Transverse colon (tissue), 4 donors: ENCODE measurements at regions of chr15 and their contacts with region 1.

Region 1: GRCh38 chr15:43081283-43081682 is 24.6 kb downstream of the UBR1 start:
- DNase-seq: no peak
- H3K4me3 ChIP-seq: no peak overlapping the region
- H3K27ac ChIP-seq: no peak overlapping the region
- H3K4me1 ChIP-seq: peaks cover 0 to 18% (median 3%) of the 10 kb centered on the region in 4 donors
- H3K27me3 ChIP-seq: no peaks in the 10 kb centered on the region
- CTCF ChIP-seq: no peak
- EP300 ChIP-seq: no peak
- POLR2A ChIP-seq: no peak

Region 2: DNA sequence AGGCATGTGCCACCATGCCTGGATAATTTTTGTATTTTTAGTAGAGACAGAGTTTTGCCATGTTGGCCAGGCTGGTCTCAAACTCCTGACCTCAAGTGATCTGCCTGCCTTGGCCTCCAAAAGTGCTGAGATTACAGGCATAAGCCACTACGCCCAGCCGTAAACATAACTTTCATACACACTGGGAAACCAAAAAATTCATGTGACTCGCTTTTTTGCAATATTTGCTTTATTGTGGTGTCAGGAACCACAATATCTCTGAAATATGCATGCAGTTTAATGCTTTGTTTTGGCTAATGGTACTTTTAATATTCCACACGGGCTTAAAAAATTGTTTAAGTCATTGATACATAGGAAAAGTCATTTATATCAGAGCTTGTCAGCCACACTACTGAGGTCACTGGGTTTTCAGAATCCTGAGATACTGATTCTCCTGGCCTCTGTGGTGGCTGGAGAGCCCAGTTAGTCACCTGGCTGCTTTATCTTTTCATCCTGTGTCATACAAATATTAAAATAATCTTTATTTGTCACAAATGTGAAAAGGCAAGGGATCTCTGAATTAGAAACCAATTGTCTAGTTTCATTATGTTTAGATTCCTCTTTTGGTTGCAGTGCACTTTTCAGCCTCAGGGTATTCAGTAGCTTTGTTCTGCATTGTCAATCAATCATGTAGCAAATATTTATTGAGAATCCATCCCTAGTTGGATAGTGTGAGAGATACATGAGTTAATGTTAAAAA is 62.1 kb after region 1 on chr15:
- in situ Hi-C with region 1: no loop called
- intact Hi-C with region 1: loop called (anchors 2 kb)
- DNase-seq: no peak
- H3K4me3 ChIP-seq: no peak overlapping the region
- H3K27ac ChIP-seq: no peak overlapping the region
- H3K4me1 ChIP-seq: peaks cover 0 to 5% (median 0%) of the 10 kb centered on the region in 4 donors
- H3K27me3 ChIP-seq: no peaks in the 10 kb centered on the region
- CTCF ChIP-seq: no peak
- EP300 ChIP-seq: no peak
- POLR2A ChIP-seq: no peak

Region 3: GRCh38 chr15:43209059-43209824 is 128.0 kb after region 1 on chr15:
- in situ Hi-C with region 1: no loop called
- intact Hi-C with region 1: no loop called
- DNase-seq: no peak
- H3K4me3 ChIP-seq: no peak overlapping the region
- H3K27ac ChIP-seq: no peak overlapping the region
- H3K4me1 ChIP-seq: peaks cover 0 to 4% (median 0%) of the 10 kb centered on the region in 4 donors
- H3K27me3 ChIP-seq: peaks cover 13% of the 10 kb centered on the region
- CTCF ChIP-seq: no peak
- EP300 ChIP-seq: no peak
- POLR2A ChIP-seq: no peak